ENCODE measurements at regions of chr1 and their contacts with region 1.

Region 1: GRCh38 chr1:27284425-27285273 is 37.3 kb upstream of the TMEM222 start:
- DNase-seq: peak; percentile 93
- ATAC-seq: peak; percentile 98
- H3K4me3 Mint-ChIP-seq: no peak overlapping the region
- H3K27ac Mint-ChIP-seq: no peak overlapping the region
- H3K4me1 Mint-ChIP-seq: peaks cover 6% of the 10 kb centered on the region
- H3K27me3 Mint-ChIP-seq: no peaks in the 10 kb centered on the region

Region 2: GRCh38 chr1:27097484-27097917 is 187.1 kb before region 1 on chr1:
- CTCF ChIA-PET with region 1: interaction called, 99 read pairs
- POLR2A ChIA-PET with region 1: interaction called, 3 read pairs
- DNase-seq: peak; percentile 85
- ATAC-seq: peak; percentile 84
- H3K4me3 Mint-ChIP-seq: no peak overlapping the region
- H3K27ac Mint-ChIP-seq: no peak overlapping the region
- H3K4me1 Mint-ChIP-seq: peaks cover 21% of the 10 kb centered on the region
- H3K27me3 Mint-ChIP-seq: no peaks in the 10 kb centered on the region

Region 3: DNA sequence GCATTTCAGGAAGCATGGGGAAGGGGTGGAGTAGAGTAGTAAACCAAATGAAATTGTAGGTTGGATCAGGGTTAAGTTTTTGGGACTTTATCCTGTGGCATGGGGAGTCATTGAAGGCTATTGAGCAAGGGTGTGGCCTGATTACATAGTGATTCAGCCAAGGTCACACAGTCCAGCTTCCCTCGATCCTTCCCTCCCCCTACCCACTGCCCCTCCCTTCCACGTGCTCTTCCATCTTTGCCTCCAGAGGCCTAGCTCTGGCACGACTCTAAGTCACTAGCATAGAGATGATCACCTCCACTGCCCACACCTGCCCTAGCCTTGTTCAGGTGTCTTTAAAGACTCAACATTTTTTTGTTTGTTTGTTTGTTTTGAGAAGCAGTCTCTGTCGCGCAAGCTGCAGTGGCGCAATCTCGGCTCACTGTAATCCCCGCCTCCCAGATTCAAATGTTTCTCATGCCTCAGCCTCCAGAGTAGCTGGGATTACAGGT is 92.6 kb before region 1 on chr1:
- CTCF ChIA-PET with region 1: interaction called, 38 read pairs
- POLR2A ChIA-PET with region 1: no interaction called
- DNase-seq: no peak
- ATAC-seq: no peak
- H3K4me3 Mint-ChIP-seq: no peak overlapping the region
- H3K27ac Mint-ChIP-seq: no peak overlapping the region
- H3K4me1 Mint-ChIP-seq: no peaks in the 10 kb centered on the region
- H3K27me3 Mint-ChIP-seq: peaks cover 6% of the 10 kb centered on the region